ENCODE measurements at regions of chr6 and their contacts with region 1.

Region 1: DNA sequence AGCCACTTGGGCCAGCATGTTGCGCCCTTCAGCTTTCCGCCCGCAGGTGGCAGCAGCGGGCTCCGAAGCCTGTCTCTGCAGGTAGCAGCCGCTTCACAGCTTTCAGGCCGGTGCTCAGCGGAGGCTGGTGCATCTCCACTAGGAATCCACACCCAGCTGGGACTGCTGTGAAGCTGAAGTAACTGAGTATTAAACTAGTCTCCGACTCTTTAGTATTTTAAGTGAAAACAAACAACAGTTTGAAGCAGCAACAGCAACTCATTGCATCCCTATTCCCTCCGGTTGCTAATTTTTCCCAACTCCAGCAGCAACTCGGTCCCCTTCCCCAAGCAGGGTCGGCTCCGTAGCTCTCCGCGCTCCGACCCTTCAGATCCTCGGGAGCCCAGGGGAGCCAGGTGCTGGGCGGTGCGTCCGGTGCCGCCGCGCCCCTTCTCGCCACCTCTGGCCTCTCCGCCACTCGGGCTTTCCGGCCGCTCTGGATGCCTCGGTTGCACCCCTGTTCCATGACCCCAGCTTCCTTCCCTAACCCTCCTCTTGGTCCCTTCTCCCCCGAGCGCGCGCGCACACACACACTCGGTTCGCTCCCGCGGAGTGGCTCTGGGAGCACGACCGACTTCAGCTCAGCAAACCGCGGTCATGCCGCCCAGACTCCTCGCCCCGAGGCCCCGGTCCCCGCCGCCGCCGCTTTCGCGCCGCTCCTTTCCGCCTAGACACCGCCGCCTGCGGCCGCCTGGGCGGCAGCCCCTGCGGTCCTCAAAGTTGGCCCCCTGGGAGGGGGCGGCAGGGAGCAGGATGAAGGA is 768 bp upstream of the NKAIN2 start:
- DNase-seq: peak; percentile 78
- ATAC-seq: peak; percentile 96
- H3K4me3 Mint-ChIP-seq: peak overlapping the region; percentile 46
- H3K27ac Mint-ChIP-seq: no peak overlapping the region
- H3K4me1 Mint-ChIP-seq: peaks cover 10% of the 10 kb centered on the region
- H3K27me3 Mint-ChIP-seq: peaks cover 39% of the 10 kb centered on the region
- CTCF ChIP-seq: peak; percentile 72

Region 2: DNA sequence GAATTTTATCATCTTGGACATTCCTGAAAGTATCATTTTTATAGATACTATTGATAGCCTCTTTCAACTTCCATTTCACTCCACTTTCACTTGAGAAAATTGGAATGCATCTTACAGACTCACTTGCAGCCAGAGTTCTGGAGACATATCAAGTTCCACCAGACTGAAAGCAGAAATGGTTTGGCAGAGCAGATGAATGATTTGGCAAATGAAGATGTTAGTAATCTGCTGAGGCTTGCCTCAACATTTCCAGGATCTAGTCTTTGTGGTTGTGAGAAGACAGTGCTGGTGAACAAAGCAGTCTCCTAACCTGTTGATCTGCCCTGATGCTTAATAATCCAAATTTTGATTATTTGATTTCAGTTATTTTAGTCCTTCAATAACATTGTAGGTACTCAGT is 368.7 kb before region 1 on chr6:
- CTCF ChIA-PET with region 1: no interaction called
- POLR2A ChIA-PET with region 1: no interaction called
- intact Hi-C with region 1: no loop called
- DNase-seq: no peak
- ATAC-seq: no peak
- H3K4me3 Mint-ChIP-seq: no peak overlapping the region
- H3K27ac Mint-ChIP-seq: no peak overlapping the region
- H3K4me1 Mint-ChIP-seq: no peaks in the 10 kb centered on the region
- H3K27me3 Mint-ChIP-seq: no peaks in the 10 kb centered on the region
- CTCF ChIP-seq: no peak

Region 3: DNA sequence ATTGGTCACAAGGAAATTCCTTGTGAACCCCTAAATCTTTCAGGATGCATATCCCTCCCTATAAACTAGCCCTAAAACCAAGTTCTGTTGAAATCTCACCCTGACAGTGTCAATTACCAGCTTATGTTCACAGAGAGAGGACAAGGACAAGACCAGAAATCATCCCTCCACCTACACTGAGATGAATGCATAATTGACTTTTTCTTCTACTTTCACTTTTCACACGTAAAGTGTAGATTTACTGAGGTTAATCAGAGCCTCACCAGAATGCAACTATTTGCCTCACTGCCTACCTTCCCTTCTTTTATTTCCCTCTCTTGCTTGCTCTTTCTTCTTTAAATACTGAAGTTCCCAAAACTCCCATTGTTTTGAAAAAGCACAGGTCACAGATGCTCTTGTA is 14.6 kb before region 1 on chr6:
- CTCF ChIA-PET with region 1: interaction called, 14 read pairs
- POLR2A ChIA-PET with region 1: no interaction called
- intact Hi-C with region 1: no loop called
- DNase-seq: no peak
- ATAC-seq: no peak
- H3K4me3 Mint-ChIP-seq: no peak overlapping the region
- H3K27ac Mint-ChIP-seq: no peak overlapping the region
- H3K4me1 Mint-ChIP-seq: no peaks in the 10 kb centered on the region
- H3K27me3 Mint-ChIP-seq: no peaks in the 10 kb centered on the region
- CTCF ChIP-seq: no peak

Region 4: GRCh38 chr6:124854338-124854922 is 1051.5 kb after region 1 on chr6:
- CTCF ChIA-PET with region 1: interaction called, 4 read pairs
- POLR2A ChIA-PET with region 1: no interaction called
- intact Hi-C with region 1: loop called (anchors 10 kb)
- DNase-seq: no peak
- ATAC-seq: no peak
- H3K4me3 Mint-ChIP-seq: no peak overlapping the region
- H3K27ac Mint-ChIP-seq: no peak overlapping the region
- H3K4me1 Mint-ChIP-seq: no peaks in the 10 kb centered on the region
- H3K27me3 Mint-ChIP-seq: peaks cover 2% of the 10 kb centered on the region
- CTCF ChIP-seq: peak; percentile 27

Measured in activated CD8-positive, alpha-beta T cell treated with anti-CD3 and anti-CD28 coated beads for 36 hours (primary cell).